ENCODE measurements at regions of chr12 and their contacts with region 1.

Region 1: GRCh38 chr12:75116639-75117198 is 92.9 kb downstream of the KCNC2 start:
- DNase-seq: no peak
- H3K4me3 ChIP-seq: no peak overlapping the region
- H3K27ac ChIP-seq: no peak overlapping the region
- H3K4me1 ChIP-seq: no peaks in the 10 kb centered on the region
- H3K27me3 ChIP-seq: no peaks in the 10 kb centered on the region
- CTCF ChIP-seq: no peak
- EP300 ChIP-seq: no peak
- POLR2A ChIP-seq: no peak

Region 2: DNA sequence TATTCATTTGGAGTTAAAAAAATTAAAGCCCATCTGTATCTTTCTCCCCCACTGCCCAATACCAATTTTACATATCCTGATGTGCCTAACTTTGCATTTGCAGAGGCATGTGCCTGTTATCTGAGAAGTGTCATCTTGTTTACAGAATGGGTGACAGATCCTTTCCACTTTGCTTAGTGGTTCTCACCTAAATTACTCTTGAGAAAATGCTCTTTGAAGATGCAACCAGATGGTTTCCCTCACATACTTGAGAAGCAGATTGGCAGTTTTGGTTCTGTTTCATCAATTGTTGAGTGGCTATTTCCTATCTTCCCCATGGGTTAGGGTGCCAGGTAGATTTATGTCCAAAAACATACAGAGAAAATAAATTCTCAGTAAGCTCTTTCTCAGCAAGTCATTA is 1630.5 kb before region 1 on chr12:
- intact Hi-C with region 1: loop called in 1 of 4 experiments (anchors 5 kb)
- DNase-seq: no peak
- H3K4me3 ChIP-seq: no peak overlapping the region
- H3K27ac ChIP-seq: no peak overlapping the region
- H3K4me1 ChIP-seq: no peaks in the 10 kb centered on the region
- H3K27me3 ChIP-seq: no peaks in the 10 kb centered on the region
- CTCF ChIP-seq: no peak
- EP300 ChIP-seq: no peak
- POLR2A ChIP-seq: no peak

Region 3: GRCh38 chr12:75020068-75020557 is 96.6 kb before region 1 on chr12:
- intact Hi-C with region 1: no loop called
- DNase-seq: no peak
- H3K4me3 ChIP-seq: no peak overlapping the region
- H3K27ac ChIP-seq: no peak overlapping the region
- H3K4me1 ChIP-seq: no peaks in the 10 kb centered on the region
- H3K27me3 ChIP-seq: no peaks in the 10 kb centered on the region
- CTCF ChIP-seq: no peak
- EP300 ChIP-seq: no peak
- POLR2A ChIP-seq: no peak

Measured in ovary (tissue), 10 donors.